ENCODE measurements at regions of chr2 and their contacts with region 1.

Region 1: DNA sequence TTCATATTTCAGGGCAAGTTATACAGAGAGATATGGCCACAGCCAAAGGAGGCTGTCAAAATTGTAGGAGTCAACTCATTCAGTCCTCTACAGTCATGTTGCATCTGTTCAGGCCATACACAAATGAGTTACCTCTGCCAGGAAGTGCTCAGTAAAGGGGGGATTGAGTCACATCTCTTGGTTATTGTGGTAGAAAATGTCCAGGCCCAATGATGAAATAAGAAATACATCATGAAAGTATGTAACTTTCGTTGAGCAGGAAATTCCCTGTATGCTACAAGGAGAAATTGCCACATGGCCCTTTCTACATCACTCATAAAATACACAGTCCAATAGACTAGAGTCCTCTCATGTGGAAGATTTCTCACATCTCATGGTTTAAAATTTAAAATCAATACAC is 103.9 kb upstream of the COL3A1 start:
- DNase-seq: no peak
- ATAC-seq: no peak

Region 2: DNA sequence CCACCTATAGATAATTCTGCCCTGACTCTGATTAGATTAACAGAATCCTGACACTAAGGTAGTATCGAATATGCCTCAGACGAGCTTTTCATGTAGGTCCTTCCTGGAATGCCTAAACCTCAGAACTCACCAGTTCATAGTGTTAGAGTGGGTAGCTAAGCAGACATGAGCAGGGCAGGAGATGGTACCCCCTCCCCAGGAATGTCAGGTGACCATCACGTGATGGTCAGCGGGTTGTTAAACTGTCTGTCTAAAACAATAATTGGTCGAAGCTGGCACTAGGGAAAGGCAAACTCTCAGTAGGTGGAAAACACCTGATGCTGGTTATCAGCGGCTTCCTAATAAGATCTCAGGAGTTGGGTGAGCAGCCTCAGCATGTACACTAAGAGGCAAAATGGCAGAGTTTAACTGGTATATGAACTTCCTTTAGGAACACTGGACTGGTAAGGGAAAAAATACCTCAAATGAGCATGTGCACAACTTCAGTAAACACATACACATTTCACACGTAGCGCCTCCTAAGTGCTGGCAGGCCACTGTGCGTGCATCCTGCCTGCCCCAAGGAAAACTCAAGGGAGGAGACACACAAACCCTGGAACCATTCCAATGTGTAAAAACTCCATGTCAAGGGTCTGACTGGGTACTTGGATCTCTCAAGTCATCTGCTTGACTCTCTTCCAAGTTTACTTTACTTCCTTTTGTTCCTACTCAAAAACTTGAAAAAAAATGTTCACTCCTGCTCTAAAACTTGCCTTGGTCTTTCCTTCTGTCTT is 239.1 kb before region 1 on chr2:
- intact Hi-C with region 1: no loop called
- DNase-seq: no peak
- ATAC-seq: no peak

Region 3: GRCh38 chr2:188695953-188696352 is 174.3 kb before region 1 on chr2:
- intact Hi-C with region 1: loop called (anchors 10 kb)
- DNase-seq: no peak
- ATAC-seq: no peak

Region 4: DNA sequence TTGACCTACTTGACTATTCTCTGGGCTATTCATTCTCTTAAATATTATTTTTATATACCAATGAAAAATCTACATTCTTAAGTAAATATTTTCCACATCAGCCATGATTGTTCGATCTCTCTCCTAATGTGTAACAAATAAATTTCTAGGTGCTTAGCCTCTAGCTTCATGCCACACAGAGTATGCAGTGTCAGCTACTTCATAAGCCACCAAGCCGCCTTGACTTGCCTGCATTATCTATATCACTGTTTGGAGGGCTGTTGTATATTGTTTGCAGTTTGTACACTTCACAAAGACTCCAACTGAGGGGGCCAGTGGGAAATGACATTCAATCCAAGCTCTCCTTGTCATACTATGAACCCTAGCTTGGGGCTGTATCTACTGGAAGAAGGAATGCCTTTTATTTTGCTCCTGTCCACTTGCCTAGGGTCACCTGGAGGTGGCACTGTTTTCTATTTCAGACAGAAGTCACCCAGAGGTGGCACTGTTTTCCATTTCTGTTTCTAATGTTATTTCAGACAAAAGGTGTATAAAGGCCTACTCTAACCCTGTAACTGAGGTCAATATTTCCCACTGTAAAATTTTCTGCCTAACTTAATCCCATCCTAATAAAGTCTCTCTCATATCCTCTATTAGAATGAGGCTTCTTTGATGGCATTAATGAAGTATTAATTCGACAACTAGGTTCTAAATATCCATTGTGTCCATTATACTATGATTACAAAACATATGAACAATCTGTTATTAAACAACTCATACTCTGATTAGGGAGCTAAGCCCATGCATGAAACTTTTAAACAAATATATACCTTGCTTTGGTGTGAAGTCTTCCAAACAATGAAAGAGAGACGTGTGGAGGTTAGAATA is 272.8 kb after region 1 on chr2:
- intact Hi-C with region 1: no loop called
- DNase-seq: no peak
- ATAC-seq: no peak

Measured in left ventricle myocardium superior (tissue), 1 donor.